Ovary (tissue), 10 donors: ENCODE measurements at regions of chr15 and their contacts with region 1.

Region 1: DNA sequence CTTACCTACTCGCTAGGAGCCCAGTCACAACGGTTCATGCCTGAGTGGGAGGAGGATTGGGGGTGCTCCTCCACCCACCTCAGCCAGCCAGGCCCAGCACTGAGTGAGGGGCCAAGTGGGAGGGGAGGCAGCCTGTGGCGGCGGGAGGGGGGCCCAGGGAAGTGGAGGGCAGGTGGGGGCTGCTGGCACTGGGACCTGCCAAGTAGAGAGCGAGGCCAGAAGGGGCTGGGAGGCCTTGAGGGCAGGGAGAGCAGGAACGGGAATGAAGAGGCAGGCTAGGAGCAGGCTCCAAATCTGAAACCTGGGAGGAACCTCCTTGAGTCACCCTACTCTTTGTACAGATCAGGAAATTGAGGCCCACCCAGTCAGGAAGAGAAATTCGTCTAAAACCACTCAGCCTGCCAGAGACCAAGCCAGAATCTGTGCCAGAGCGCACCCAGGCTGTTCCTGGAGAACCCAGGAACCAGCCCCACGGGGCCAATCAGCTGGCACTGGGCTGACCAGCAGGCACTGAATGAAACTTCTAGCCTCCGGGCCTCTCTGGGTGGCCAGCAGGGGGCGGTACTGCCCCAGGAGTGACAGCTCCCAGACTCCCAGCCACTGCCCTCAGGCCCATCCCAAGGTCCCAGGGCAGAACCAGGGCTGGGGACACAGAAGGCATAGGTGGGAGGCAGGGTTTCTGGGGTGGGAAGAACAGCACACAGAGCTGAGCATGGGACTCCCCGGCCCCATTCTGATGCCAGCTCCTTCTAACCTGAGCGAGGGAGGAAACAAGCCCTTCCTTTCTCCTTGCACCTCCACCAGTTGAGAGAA is 14.8 kb upstream of the CYP11A1 start:
- DNase-seq: peak; percentile 82 to 93 (median 90)
- H3K4me3 ChIP-seq: no peak overlapping the region
- H3K27ac ChIP-seq: no peak overlapping the region
- H3K4me1 ChIP-seq: no peaks in the 10 kb centered on the region
- H3K27me3 ChIP-seq: no peaks in the 10 kb centered on the region
- CTCF ChIP-seq: peak; percentile 86 to 96 (median 96)
- EP300 ChIP-seq: no peak
- POLR2A ChIP-seq: peak; percentile 22

Region 2: DNA sequence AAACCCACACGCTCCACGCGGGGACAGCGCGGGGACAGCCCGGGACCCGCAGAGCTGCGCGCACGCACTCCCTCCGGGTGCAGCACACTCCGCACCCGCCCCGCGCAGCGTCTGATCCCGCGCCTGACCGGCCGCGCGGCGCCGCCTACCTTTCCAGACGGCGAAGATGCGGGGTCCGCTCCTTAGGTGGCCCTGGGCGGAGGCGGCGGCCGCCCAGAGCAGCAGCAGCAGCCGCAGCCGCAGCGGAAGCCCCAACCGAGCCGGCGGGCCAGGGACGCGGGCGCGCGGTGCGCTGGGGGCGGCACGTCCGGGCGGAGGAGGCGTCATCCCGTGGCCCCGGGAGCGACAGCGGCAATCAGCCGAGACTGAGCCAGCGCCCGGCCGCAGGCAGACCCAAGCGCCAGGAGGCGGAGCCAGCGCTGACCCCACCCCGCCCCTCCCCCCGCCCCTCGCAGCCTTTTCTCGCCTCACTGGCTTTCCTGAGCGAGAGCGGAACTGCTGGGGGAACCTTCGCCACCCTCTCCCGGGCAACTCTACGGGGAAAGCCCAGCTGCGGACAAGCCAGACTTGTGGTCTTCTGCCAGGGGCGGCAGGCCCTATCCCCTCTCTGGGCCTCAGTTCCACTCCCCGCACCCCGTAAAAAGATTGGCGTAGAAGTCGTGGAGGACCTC is 51.5 kb after region 1 on chr15 and contains the start of gene SEMA7A:
- intact Hi-C with region 1: loop called in 3 of 4 experiments (anchors 1 to 2 kb)
- DNase-seq: peak; percentile 79 to 86 (median 85)
- H3K4me3 ChIP-seq: peak within 1 kb of the TSS; percentile 54
- H3K27ac ChIP-seq: peak within 1 kb of the TSS; percentile 3 to 49
- H3K4me1 ChIP-seq: peaks cover 9% of the 10 kb centered on the region
- H3K27me3 ChIP-seq: no peaks in the 10 kb centered on the region
- CTCF ChIP-seq: peak in 1 of 3 donors; percentile 23
- EP300 ChIP-seq: no peak
- POLR2A ChIP-seq: peak; percentile 69
- total RNA-seq, gene SEMA7A: 3.2 to 10.1 (median 8.3) TPM

Region 3: DNA sequence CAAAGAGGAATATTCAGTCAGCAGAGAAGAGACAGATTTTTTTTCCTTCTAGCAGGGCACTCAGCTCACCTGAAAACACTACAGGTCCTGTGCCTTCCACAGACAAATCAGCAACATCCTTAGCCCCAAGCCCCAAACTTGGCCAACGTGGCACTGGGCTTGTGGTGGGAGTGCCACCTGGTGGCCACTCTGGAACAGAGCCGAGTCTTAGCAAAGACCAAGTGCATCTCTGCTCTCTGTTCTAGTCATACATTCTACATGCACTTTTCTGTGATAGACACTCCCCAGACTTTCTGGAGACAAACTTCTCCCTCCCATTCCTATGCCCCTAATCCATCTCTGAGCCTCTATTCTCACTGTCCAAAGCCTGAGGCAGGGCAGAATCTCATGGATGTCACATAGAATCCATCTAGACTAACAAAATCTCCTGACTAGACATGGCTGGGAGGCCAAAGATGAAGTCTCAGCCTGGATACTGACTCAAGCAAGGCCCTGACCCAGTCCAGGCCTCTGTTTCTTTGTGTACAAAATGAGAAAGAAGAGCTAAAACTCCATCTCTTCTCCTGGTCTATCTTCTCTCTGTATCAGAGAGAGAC is 56.6 kb after region 1 on chr15:
- intact Hi-C with region 1: loop called in 3 of 4 experiments (anchors 1 to 2 kb)
- DNase-seq: peak; percentile 71 to 86 (median 82)
- H3K4me3 ChIP-seq: no peak overlapping the region
- H3K27ac ChIP-seq: no peak overlapping the region
- H3K4me1 ChIP-seq: peaks cover 13% of the 10 kb centered on the region
- H3K27me3 ChIP-seq: no peaks in the 10 kb centered on the region
- CTCF ChIP-seq: peak; percentile 81 to 94 (median 90)
- EP300 ChIP-seq: no peak
- POLR2A ChIP-seq: no peak

Region 4: DNA sequence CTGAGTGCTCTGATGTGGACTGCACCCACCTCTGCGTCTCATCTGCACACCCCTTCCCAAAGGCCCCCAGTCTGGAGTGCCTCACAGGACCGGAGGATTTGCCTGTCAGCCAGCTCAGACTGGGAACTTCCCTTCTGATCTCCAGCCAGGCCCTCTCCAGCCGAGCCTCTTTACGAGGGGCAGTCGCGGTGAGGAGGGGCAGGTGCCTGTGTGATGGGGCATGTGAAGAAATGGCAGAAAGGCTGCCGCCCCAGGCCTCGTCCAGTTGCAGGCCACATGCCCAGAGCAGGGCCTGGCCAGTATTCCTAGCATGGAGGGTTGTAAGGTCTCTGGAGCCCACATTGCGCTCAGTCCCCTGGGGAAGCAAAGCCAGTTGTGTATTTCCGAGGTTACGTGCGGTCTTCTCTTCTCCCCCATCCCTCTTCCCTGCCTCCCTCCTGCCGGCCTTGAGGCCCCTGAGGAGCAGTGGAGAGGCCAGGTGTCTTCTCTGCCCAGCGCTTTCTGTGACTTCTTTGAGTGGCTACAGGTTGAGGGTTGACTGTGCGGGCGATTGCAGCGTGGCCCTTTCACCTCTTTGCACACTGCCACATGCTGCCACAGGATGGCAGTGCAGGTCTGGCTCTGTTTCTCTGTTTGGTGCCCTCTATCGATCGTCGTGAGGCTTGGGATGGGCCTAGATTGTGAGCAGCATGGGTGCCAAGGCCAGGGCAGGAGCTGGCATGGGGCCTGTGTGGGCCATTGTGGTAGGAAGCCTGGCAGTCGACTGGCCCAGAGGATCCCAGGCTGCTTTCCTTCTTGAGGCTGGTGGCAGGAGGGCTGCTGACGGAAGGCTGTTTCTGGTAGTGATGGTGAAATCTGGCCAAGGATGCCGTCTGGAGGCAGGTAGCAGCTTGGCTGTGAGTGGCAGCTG is 238.7 kb after region 1 on chr15:
- intact Hi-C with region 1: loop called in 2 of 4 experiments (anchors 10 kb)
- DNase-seq: peak in 2 of 5 donors; percentile 15 to 51
- H3K4me3 ChIP-seq: no peak overlapping the region
- H3K27ac ChIP-seq: no peak overlapping the region
- H3K4me1 ChIP-seq: peaks cover 2% of the 10 kb centered on the region
- H3K27me3 ChIP-seq: no peaks in the 10 kb centered on the region
- CTCF ChIP-seq: peak in 2 of 3 donors; percentile 14 to 20
- EP300 ChIP-seq: no peak
- POLR2A ChIP-seq: no peak

Region 5: GRCh38 chr15:74768771-74769342 is 386.6 kb after region 1 on chr15:
- intact Hi-C with region 1: loop called in 3 of 4 experiments (anchors 10 kb)
- DNase-seq: peak; percentile 50 to 69 (median 67)
- H3K4me3 ChIP-seq: no peak overlapping the region
- H3K27ac ChIP-seq: no peak overlapping the region
- H3K4me1 ChIP-seq: no peaks in the 10 kb centered on the region
- H3K27me3 ChIP-seq: no peaks in the 10 kb centered on the region
- CTCF ChIP-seq: peak; percentile 65 to 79 (median 78)
- EP300 ChIP-seq: no peak
- POLR2A ChIP-seq: no peak

Region 6: DNA sequence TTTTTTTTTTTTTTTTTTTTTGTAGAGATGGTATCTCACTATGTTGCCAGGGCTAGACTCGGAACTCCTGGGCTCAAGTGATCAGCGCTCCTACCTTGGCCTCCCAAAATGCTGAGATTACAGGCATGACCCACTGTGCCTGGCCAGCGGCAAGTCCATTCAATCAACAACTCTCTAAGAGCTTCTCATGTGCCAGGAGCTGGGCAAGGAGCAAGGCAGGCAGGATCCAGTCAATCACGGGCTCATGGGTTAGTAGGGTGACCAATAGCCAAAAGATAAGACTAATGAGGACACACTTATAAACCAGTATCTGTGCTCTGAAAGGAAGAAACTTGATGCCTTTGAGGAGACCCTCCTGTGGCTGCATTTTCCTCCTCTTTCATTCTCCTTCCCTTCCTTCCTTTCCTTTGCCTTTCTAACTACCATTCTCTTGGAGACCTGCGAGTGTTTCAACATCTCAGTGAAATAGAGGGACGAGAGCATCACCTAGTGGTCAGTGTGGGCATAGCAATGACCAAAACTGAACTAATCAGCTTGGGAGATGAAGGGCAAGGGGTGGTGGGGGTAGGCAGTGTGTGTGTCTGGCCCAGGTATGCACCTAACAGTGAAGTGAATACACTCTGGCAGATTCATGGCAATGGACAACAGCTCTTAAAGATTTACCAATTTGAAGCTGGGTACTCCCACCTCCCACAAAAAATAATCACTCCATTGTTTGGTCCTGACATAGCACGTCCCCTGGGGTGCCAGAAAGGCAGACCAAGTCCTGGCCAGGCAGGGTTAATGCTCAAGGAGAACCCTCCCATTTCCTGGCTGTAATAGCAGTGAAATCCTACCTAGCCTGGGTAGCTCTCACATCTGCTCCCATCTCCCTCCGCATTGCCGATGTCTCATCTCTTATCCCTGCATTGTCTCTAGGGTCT is 568.1 kb after region 1 on chr15:
- intact Hi-C with region 1: loop called in 1 of 4 experiments (anchors 5 kb)
- DNase-seq: peak; percentile 60 to 87 (median 74)
- H3K4me3 ChIP-seq: no peak overlapping the region
- H3K27ac ChIP-seq: no peak overlapping the region
- H3K4me1 ChIP-seq: peaks cover 2% of the 10 kb centered on the region
- H3K27me3 ChIP-seq: no peaks in the 10 kb centered on the region
- CTCF ChIP-seq: peak; percentile 93 to 98 (median 98)
- EP300 ChIP-seq: no peak
- POLR2A ChIP-seq: no peak